Activated naive CD4-positive, alpha-beta T cell treated with anti-CD3 and anti-CD28 coated beads for 36 hours (primary cell): ENCODE measurements at regions of chr6 and their contacts with region 1.

Region 1: GRCh38 chr6:25441663-25442270 is 162.6 kb downstream of the CARMIL1 start:
- DNase-seq: no peak
- H3K4me3 Mint-ChIP-seq: no peak overlapping the region
- H3K27ac Mint-ChIP-seq: peak overlapping the region; percentile 69
- H3K4me1 Mint-ChIP-seq: peaks cover 28% of the 10 kb centered on the region
- H3K27me3 Mint-ChIP-seq: no peaks in the 10 kb centered on the region

Region 2: DNA sequence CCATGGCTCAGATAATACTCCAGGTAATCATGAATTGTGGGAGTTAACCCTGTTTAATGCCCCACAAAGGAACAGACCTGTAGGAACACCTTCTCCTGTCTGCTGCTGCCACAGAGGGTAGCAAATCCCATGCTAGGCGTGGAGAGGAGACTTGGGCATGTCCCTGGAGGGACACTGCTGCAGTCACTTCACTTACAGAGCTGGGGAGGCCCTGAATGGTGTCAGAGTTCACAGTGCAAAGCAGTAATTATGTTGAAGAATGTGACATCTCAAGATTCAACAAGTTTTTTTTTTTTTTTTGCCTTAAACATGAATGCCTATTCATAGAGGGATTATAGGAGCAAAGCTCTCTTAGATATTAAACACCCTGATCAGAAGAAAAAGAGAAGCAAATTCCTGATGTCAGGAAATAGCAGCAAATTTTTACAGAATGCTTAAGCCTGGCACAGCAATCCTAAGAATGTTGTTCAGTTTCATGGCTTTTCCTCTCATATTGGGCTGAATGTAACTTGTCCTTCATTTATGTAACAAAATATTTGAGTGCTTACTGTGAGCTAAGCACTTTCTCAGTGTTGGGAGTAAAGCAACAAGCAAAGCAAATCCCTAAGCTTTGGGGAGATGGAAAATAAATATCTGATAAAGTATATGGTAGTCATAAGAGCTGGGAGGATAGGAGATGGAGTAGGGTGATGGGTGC is 117.6 kb before region 1 on chr6:
- CTCF ChIA-PET with region 1: no interaction called
- intact Hi-C with region 1: no loop called
- DNase-seq: no peak
- H3K4me3 Mint-ChIP-seq: no peak overlapping the region
- H3K27ac Mint-ChIP-seq: no peak overlapping the region
- H3K4me1 Mint-ChIP-seq: no peaks in the 10 kb centered on the region
- H3K27me3 Mint-ChIP-seq: no peaks in the 10 kb centered on the region

Region 3: DNA sequence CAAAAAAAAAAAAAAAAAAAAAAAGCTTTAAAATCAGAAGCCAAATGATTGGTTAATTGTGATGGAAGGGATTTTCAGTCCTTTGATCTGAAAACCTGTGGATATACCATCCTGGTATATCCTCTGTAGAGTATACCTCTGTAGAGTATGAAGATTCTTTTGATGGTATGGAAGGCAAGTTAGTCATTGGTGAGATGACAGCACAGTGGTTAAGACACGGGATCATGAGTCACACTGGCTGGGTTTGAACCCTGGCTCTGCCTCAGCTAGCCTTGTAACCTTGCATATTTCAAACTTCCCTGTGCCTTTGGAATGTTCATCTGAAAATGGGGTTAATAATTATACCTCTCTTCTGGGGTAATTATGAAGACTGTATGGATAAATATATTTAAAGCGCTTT is 16.7 kb after region 1 on chr6:
- CTCF ChIA-PET with region 1: no interaction called
- intact Hi-C with region 1: loop called (anchors 2 kb)
- DNase-seq: peak; percentile 55
- H3K4me3 Mint-ChIP-seq: no peak overlapping the region
- H3K27ac Mint-ChIP-seq: no peak overlapping the region
- H3K4me1 Mint-ChIP-seq: no peaks in the 10 kb centered on the region
- H3K27me3 Mint-ChIP-seq: no peaks in the 10 kb centered on the region